Prostate gland (tissue), 2 donors: ENCODE measurements at regions of chr2 and their contacts with region 1.

Region 1: DNA sequence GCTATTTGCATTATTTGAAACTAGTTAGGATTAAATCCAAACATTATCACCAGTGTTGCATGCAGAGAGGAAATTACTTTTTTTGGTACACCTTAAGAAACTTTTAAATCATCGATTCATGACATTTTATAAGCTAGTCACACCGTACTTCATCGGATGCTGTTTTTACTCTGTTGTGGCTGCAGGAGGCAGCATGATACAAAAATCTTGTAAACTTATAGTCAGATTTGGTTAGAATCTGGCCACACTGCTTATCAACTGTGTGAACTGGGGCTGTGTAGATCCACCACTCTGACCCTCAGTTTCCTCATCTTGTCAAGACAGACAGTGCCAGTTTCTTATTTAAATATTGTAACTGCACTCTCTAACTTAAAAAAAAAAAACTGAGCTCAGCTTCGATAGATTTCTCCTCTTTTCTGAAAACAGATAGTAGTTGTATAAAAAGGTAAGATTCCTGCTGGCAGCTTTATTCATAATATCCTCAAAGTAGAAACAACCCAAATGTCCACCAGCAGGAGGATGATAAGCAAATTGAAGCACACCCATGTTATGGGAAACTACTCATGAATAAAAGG is 77.8 kb downstream of the RAPGEF4 start:
- DNase-seq: peak; percentile 14
- H3K4me3 ChIP-seq: no peak overlapping the region
- H3K27ac ChIP-seq: no peak overlapping the region
- H3K4me1 ChIP-seq: no peaks in the 10 kb centered on the region
- H3K27me3 ChIP-seq: no peaks in the 10 kb centered on the region
- CTCF ChIP-seq: peak in 3 of 4 experiments; percentile 23 to 60 (median 53)
- POLR2A ChIP-seq: no peak

Region 2: DNA sequence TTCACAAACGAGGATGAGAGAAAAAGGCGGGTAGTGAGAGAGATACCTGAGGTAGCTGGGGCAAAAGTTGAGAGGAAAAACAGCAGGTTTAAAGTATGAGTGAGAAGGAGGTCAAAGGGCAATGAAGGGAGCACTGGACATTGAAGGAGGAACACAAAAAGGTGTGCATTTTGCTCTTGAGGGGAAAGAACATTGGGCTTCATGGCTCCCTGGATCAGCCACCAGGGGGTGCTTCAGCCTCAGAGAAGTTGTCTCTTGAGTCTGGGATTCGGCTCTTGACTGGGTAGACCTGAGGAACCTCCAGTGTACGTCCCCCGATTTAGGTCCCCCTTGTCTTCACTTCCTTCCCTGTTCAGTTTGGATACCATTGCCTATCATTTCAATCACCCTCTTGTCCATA is 50.8 kb after region 1 on chr2:
- intact Hi-C with region 1: loop called (anchors 5 kb)
- DNase-seq: peak; percentile 57
- H3K4me3 ChIP-seq: no peak overlapping the region
- H3K27ac ChIP-seq: no peak overlapping the region
- H3K4me1 ChIP-seq: peaks cover 4% of the 10 kb centered on the region
- H3K27me3 ChIP-seq: no peaks in the 10 kb centered on the region
- CTCF ChIP-seq: peak; percentile 33 to 86 (median 64)
- POLR2A ChIP-seq: no peak

Region 3: DNA sequence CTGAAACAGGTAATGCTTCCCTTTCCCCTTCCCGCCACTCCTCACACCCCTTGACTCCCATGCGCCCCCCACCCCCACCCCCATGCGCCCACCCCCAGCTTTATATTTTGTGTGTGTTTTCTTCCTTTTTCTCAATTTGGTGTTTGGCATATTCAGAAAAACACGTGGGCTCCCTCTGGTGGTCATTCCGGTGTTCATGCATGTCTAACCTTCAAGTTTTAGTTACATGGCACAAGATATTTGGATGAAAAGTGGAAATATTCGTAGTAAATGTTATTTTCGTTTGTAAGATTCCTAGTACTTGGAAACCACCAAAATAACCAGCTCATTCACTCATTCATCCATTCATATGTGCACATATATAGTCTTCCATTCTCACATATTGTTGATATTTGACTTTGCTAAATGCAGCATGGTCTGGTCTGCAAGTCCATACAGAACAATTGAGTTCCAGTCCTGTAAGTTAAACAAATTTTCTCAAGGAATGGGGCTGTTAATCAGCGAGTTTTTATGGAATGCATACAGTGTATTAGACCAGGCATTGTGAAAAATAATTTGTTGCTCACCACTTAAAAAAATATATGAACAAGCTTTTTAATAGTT is 118.6 kb after region 1 on chr2:
- intact Hi-C with region 1: loop called (anchors 2 kb)
- DNase-seq: peak; percentile 75
- H3K4me3 ChIP-seq: peak overlapping the region in 1 of 2 donors; percentile 10
- H3K27ac ChIP-seq: peak overlapping the region; percentile 62 to 73
- H3K4me1 ChIP-seq: no peaks in the 10 kb centered on the region
- H3K27me3 ChIP-seq: no peaks in the 10 kb centered on the region
- CTCF ChIP-seq: peak; percentile 66 to 88 (median 76)
- POLR2A ChIP-seq: no peak